ENCODE measurements at regions of chr12 and their contacts with region 1.

Region 1: GRCh38 chr12:63151623-63152320 is 771 bp upstream of the AVPR1A start:
- DNase-seq: no peak
- H3K4me3 ChIP-seq: no peak overlapping the region
- H3K27me3 ChIP-seq: peaks cover 29% of the 10 kb centered on the region
- CTCF ChIP-seq: peak; percentile 86

Region 2: GRCh38 chr12:62767496-62767895 is 384.3 kb before region 1 on chr12:
- CTCF ChIA-PET with region 1: no interaction called
- POLR2A ChIA-PET with region 1: no interaction called
- DNase-seq: no peak
- H3K4me3 ChIP-seq: no peak overlapping the region
- H3K27me3 ChIP-seq: no peaks in the 10 kb centered on the region
- CTCF ChIP-seq: no peak

Region 3: DNA sequence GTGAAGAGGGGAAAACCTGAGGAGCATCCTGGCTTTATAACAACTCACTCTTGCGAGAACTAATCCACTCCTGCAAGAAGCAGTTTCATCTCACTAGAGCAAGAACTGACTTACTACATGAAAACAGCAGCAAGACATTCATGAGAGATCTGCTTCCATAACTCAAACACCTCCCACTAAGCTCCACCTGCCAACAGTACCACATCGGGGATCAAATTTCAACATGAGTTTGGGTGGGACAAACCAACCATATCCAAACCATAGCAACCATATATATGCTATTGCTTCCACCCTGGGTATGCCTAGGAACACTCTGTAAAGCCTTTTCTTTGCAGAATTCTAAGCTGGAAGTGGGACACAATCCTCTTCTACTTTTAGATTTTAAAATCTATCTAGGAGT is 13.1 kb after region 1 on chr12:
- CTCF ChIA-PET with region 1: interaction called, 12 read pairs
- POLR2A ChIA-PET with region 1: no interaction called
- DNase-seq: no peak
- H3K4me3 ChIP-seq: no peak overlapping the region
- H3K27me3 ChIP-seq: no peaks in the 10 kb centered on the region; the same call in 1 of the 2 replicates
- CTCF ChIP-seq: no peak